ENCODE measurements at regions of chrX and their contacts with region 1.

Region 1: DNA sequence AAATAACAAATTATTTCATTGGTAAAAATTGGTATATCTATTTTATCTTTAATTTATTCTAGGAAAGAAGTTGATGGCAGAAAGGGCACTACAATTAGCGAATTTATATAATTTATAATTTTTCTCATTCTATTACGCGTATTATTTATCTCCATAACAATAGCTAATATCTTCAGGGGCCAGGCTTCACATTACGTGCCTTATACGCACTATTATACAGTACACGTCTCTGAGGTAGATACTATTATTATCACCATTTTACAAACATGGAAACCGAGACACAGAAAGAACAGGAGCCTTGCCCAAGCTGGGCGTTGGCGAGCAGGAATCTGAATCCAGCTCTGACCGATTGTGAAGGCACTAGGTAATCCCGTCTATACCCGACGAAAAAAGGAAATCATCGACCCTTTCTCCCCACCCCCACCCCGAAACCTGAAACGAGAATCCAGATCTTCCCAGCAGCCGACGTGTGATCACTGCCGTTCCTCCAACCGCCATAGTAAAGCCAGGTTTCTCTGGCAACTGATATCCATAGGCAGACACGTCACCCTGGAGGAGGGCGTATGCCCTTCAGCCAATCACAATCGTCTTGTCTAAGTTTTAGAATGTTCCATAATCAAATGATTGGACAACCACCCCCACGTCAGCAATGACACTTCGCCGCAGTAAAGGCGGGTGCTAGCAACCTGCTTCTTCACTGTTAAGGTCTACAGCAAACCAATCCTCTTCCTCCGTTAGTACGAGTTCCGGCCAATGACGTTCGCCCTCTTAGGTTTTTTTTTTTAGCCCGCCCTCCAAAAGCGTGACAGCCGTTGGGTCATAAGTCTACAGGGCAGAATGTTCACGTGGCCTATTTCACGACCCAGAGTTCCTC is at the start of gene MORF4L2:
- DNase-seq: peak; percentile 98
- H3K4me3 ChIP-seq: peak within 1 kb of the TSS; percentile 47 to 59 (median 56)
- H3K27ac ChIP-seq: peak within 1 kb of the TSS; percentile 90 to 95 (median 92)
- H3K4me1 ChIP-seq: peaks cover 0 to 30% (median 4%) of the 10 kb centered on the region in 4 donors
- H3K27me3 ChIP-seq: no peaks in the 10 kb centered on the region
- CTCF ChIP-seq: no peak
- EP300 ChIP-seq: no peak
- POLR2A ChIP-seq: peak; percentile 85 to 87
- total RNA-seq, gene MORF4L2: 171 to 255 (median 215) TPM

Region 2: DNA sequence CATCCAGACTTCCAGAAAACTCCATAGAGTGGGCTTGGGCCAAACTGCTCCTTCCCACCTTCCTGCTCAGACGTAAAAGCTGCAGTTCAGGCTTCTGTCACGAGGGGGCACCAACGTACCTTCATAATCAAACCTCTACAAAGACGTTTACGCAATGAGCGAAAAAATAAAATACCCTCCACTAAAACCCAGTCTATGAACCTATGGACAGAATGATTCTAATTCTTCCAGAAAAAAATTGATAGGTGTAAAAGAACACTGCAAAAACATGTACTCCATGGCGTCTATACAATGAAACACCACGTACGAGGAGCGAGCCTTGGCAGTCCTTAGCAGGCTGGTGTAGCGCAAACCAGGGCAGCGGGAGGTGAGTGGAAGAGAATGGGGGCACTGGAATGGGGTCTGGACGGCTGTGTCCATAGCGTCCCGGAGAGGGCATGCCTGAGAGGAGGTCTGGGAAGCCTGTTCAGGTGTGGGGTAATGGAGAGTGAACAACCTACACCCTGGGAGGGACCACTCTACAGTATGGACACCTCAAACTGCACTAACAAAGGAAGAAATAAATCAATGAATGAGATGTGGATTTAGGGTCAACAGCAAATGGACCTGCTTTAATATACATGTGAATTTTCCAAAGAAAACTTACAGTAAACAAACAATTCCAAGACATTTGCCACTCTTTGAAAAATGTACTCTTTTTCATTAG is 152.8 kb before region 1 on chrX:
- intact Hi-C with region 1: loop called (anchors 5 kb)
- DNase-seq: peak; percentile 89
- H3K4me3 ChIP-seq: peak overlapping the region; percentile 15 to 46 (median 38)
- H3K27ac ChIP-seq: peak overlapping the region; percentile 17 to 46 (median 31)
- H3K4me1 ChIP-seq: no peaks in the 10 kb centered on the region
- H3K27me3 ChIP-seq: no peaks in the 10 kb centered on the region
- CTCF ChIP-seq: peak; percentile 58 to 74 (median 68)
- EP300 ChIP-seq: no peak
- POLR2A ChIP-seq: no peak

Region 3: GRCh38 chrX:103585411-103586313 is 100.8 kb before region 1 on chrX and contains the start of gene TCEAL4:
- intact Hi-C with region 1: loop called (anchors 5 kb)
- DNase-seq: peak; percentile 85
- H3K4me3 ChIP-seq: peak within 1 kb of the TSS; percentile 47 to 65 (median 64)
- H3K27ac ChIP-seq: peak within 1 kb of the TSS; percentile 87 to 92 (median 88)
- H3K4me1 ChIP-seq: peaks cover 0 to 13% (median 0%) of the 10 kb centered on the region in 4 donors
- H3K27me3 ChIP-seq: no peaks in the 10 kb centered on the region
- CTCF ChIP-seq: no peak
- EP300 ChIP-seq: no peak
- POLR2A ChIP-seq: peak; percentile 52 to 64
- total RNA-seq, gene TCEAL4: 127 to 366 (median 178) TPM

Region 4: GRCh38 chrX:103629318-103630170 is 56.9 kb before region 1 on chrX:
- intact Hi-C with region 1: loop called (anchors 2 kb)
- DNase-seq: peak; percentile 83
- H3K4me3 ChIP-seq: peak overlapping the region; percentile 46 to 65 (median 60)
- H3K27ac ChIP-seq: peak overlapping the region; percentile 89 to 95 (median 92)
- H3K4me1 ChIP-seq: peaks cover 0 to 17% (median 3%) of the 10 kb centered on the region in 4 donors
- H3K27me3 ChIP-seq: no peaks in the 10 kb centered on the region
- CTCF ChIP-seq: peak in 2 of 4 experiments; percentile 15 to 30
- EP300 ChIP-seq: no peak
- POLR2A ChIP-seq: peak; percentile 15 to 21

Region 5: DNA sequence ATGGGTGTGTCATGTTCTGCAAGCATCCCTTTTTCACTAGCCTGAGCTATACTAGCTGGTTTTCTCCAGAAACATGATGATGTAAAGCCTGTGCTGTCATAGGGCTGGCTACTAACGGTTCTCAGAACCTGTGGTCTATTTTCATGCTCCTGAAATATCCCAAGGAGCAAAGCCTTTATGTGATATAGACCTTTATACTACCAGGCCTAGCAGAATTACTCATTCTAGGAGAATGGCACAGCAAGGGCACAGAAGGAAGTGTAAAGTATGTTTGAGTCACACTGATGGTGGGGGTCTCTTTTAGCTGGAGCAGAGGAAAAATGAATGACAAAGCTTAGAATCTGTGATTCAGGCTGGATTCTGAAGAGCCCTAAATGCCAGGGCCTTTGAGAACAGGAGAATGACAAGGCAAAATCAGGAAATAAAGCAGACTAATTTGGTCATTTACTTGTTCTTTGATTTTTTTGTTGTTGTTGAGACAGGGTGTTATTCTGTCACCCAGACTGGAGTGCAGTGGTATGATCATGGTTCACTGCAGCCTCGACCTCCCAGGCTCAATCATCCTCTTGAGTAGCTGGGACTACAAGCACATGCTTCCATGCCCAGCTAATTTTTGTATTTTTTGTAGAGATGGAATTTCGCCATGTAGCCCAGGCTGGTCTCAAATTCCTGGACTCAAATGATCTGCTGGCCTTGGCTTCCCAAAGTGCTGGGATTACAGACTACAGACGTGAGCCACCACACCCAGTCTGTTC is 45.9 kb before region 1 on chrX:
- intact Hi-C with region 1: no loop called
- DNase-seq: no peak
- H3K4me3 ChIP-seq: no peak overlapping the region
- H3K27ac ChIP-seq: no peak overlapping the region
- H3K4me1 ChIP-seq: no peaks in the 10 kb centered on the region
- H3K27me3 ChIP-seq: no peaks in the 10 kb centered on the region
- CTCF ChIP-seq: no peak
- EP300 ChIP-seq: no peak
- POLR2A ChIP-seq: no peak

Region 6: DNA sequence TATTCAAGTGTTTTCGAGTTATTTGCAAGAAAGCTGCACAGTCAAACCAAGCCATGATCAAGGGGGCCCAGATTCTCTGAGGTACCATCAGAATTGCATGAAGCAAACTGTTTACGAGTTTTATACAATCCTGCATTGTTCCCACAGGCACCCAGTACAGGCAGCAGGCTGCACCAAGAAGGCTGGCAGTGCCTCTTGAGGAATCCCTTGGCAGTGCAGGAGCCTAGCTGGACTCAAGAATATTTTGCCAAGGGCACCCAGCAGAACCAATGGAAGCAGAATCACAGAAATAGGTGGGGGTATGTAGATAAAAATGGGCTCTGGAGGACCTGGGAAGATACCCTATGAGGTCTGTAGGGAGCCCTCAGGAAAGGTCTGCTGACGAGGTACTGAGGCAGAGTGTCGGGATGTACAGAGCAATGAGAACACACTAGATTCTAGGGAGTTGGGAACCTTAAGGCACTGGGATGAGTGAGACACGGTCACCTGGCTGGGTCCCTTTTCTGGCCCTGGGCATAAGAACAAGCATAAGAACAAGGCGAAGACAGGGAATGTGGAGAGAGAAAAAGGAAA is 87.7 kb after region 1 on chrX:
- intact Hi-C with region 1: loop called (anchors 1 kb)
- DNase-seq: no peak
- H3K4me3 ChIP-seq: no peak overlapping the region
- H3K27ac ChIP-seq: no peak overlapping the region
- H3K4me1 ChIP-seq: peaks cover 0 to 5% (median 0%) of the 10 kb centered on the region in 4 donors
- H3K27me3 ChIP-seq: no peaks in the 10 kb centered on the region
- CTCF ChIP-seq: peak in 3 of 4 experiments; percentile 14 to 36 (median 25)
- EP300 ChIP-seq: no peak
- POLR2A ChIP-seq: no peak

Region 7: GRCh38 chrX:103817502-103817901 is 131.1 kb after region 1 on chrX:
- intact Hi-C with region 1: loop called (anchors 1 kb)
- DNase-seq: no peak
- H3K4me3 ChIP-seq: no peak overlapping the region
- H3K27ac ChIP-seq: no peak overlapping the region
- H3K4me1 ChIP-seq: no peaks in the 10 kb centered on the region
- H3K27me3 ChIP-seq: no peaks in the 10 kb centered on the region
- CTCF ChIP-seq: peak; percentile 33 to 66 (median 35)
- EP300 ChIP-seq: no peak
- POLR2A ChIP-seq: no peak

Region 8: GRCh38 chrX:103831803-103832544 is 145.5 kb after region 1 on chrX and contains the start of gene RAB9B:
- intact Hi-C with region 1: loop called (anchors 5 kb)
- DNase-seq: peak; percentile 89
- H3K4me3 ChIP-seq: peak within 1 kb of the TSS; percentile 55 to 67 (median 64)
- H3K27ac ChIP-seq: peak within 1 kb of the TSS; percentile 82 to 88 (median 86)
- H3K4me1 ChIP-seq: peaks cover 0 to 29% (median 4%) of the 10 kb centered on the region in 4 donors
- H3K27me3 ChIP-seq: peaks cover 0 to 3% (median 0%) of the 10 kb centered on the region in 3 donors
- CTCF ChIP-seq: no peak
- EP300 ChIP-seq: no peak
- POLR2A ChIP-seq: no peak
- total RNA-seq, gene RAB9B: 9.2 to 18.8 (median 12.6) TPM